Right cardiac atrium (tissue), 5 donors: ENCODE measurements at regions of chr5 and their contacts with region 1.

Region 1: DNA sequence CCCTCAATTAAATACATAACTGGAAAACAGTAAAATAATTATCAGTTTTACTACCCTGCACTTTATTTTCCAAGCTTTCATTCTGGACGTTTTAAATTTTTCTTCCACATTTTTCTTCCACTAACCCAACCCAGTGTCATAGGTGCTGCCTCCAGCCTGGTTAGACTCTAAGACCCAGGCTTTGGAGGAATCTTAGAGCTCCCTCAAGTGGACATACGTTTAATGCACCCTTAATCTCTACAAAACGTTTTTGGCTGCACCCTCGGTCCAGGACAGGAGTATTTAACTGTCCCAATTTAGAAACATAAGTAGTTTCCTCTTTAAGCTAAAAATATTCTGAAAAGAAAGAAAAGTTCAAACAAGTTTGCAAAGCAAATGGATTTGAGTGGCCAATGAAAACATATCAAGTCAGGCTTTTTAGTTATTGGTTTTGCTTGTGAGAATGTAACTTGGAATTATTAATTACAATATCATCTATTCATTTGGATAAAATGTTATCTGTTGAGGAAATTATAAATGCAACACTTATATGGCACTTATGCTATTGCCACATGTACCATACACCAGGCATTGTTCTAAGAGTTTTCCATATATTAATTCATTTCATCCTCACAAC is 38.9 kb downstream of the CDH6 start:
- DNase-seq: no peak
- ATAC-seq: peak; percentile 82 to 85
- H3K4me3 ChIP-seq: no peak overlapping the region
- H3K27ac ChIP-seq: no peak overlapping the region
- H3K4me1 ChIP-seq: no peaks in the 10 kb centered on the region
- H3K27me3 ChIP-seq: no peaks in the 10 kb centered on the region

Region 2: DNA sequence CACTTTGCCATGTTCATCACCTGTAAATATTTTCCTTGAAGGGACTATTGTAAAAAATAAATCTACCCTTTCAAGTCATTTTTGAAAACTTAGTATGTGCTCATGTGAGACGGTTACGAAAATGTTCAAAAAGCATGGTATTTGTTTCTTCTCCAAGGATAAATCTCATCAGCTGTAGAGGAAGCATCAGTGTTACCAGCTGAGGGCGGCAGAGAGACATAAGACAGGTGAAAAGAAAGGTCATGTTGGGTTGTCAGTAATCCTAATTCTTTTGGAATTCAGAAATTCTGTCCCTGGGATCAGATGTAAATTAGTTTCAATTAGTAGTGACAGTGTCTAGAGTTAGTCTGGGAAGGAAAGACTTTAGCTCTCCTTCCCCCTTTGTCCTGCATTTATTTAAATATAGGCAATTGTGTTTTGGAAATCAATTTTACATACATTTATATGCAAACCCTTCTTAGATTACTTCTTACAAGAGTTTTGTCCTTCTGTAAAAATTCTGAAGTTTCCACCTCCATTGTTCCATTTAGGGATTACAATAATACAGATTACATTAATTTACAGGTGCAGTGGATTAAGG is 830.8 kb before region 1 on chr5:
- intact Hi-C with region 1: loop called in 1 of 4 experiments (anchors 10 kb)
- DNase-seq: peak in 1 of 3 donors; percentile 32
- ATAC-seq: no peak
- H3K4me3 ChIP-seq: no peak overlapping the region
- H3K27ac ChIP-seq: no peak overlapping the region
- H3K4me1 ChIP-seq: no peaks in the 10 kb centered on the region
- H3K27me3 ChIP-seq: no peaks in the 10 kb centered on the region

Region 3: GRCh38 chr5:31186672-31187267 is 45.6 kb before region 1 on chr5:
- intact Hi-C with region 1: no loop called
- DNase-seq: no peak
- ATAC-seq: no peak
- H3K4me3 ChIP-seq: no peak overlapping the region
- H3K27ac ChIP-seq: no peak overlapping the region
- H3K4me1 ChIP-seq: no peaks in the 10 kb centered on the region
- H3K27me3 ChIP-seq: no peaks in the 10 kb centered on the region